Sciatic nerve (tissue), 2 donors: ENCODE measurements at regions of chr22 and their contacts with region 1.

Region 1: GRCh38 chr22:17830043-17830961 is 56.0 kb upstream of the BID start:
- DNase-seq: peak; percentile 91
- ATAC-seq: peak; percentile 82

Region 2: GRCh38 chr22:17706018-17706900 is 124.0 kb before region 1 on chr22:
- intact Hi-C with region 1: no loop called
- DNase-seq: no peak
- ATAC-seq: peak; percentile 98

Region 3: DNA sequence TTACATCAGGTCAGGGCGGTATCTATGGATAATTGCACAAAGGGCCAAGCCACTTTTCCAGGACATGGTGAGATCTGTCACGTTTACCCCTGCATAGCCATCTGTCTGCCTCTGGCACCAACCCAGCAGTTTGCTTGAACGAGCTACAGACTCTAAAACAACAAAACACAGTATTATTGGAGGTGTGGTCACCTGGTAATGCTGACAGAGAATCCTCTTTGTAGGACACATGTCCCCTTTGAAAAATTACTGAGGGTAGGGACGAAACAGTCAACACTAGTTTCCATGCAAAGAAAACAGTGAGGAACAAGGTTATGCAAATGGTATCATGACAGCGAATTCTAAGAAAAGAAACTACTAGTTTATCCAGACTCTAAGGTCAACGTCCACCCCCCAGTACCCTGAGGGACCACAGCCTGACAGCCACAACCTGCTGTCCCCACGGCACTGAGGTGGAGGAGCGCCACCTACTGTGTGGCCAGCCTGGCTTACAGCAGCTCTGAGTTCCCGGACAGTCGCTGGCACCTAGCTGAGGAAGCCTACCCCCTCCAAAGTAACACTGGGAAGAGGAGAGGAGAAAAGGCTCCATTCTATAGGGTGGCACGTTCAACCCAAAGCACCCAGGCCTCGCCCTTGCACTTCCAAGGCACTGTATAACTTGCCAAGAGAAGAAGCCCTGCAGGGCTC is 61.3 kb after region 1 on chr22:
- intact Hi-C with region 1: loop called (anchors 5 kb)
- DNase-seq: no peak
- ATAC-seq: peak; percentile 75

Region 4: GRCh38 chr22:17920145-17920605 is 89.9 kb after region 1 on chr22:
- intact Hi-C with region 1: no loop called
- DNase-seq: no peak
- ATAC-seq: peak; percentile 57

Region 5: GRCh38 chr22:18024276-18024947 is 194.1 kb after region 1 on chr22 and contains the start of gene MICAL3:
- intact Hi-C with region 1: loop called (anchors 10 kb)
- DNase-seq: peak; percentile 75
- ATAC-seq: peak; percentile 80
- total RNA-seq, gene MICAL3: 131 TPM

Region 6: GRCh38 chr22:18070556-18071306 is 240.4 kb after region 1 on chr22:
- intact Hi-C with region 1: loop called (anchors 5 kb)
- DNase-seq: no peak
- ATAC-seq: no peak

Region 7: DNA sequence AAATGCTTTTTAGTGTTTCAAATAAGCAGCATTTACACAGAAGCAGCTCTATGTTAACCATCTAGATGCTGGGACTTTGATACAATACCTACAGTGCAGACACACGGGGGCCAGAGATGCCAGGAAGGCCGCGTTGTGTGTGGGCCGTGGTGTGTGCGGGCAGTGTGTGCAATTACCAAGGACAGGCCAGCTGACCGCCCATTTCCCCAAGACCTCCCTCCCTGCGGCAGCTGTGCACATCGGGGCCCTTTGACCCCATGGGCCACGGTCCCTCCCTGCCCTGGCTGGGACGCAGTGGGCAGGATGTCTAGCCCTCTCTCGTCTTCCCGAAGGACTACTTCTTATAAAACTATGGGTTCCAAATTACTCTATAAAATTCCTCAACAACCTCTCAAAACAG is 1422.8 kb after region 1 on chr22:
- intact Hi-C with region 1: no loop called
- DNase-seq: no peak
- ATAC-seq: no peak